MCF 10A (cell line): ENCODE measurements at regions of chr18 and their contacts with region 1.

Region 1: DNA sequence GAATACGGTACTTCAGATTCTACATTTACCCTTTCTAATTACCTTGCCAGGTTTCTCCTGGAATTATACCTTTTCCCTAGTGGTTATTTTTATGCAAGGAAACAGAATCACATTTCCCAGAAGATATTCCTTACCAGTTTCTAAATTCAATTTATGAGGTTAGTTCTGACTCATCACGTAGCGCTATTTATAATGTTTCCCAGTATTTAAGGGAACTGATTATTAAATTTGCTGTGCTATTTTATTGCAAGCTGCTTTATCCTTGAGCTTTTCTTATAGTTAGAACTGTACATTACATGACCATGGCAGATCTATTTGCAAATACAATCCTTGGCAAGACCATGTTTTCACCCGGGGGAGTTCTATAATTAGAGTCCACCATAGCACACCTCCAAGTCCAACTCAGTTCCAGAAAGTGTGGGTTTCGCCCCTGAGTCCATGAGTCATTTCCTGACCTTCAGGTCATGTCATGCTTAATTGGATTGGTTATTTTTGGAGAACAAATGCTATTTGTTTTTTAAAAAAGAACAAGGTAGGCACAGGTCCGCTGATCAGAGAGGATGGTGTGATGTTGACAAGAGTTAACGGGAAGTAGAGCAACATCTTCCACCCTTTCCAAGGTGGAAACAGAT is 126.6 kb downstream of the ZNF532 start:
- DNase-seq: peak; percentile 90
- H3K4me3 Mint-ChIP-seq: no peak overlapping the region
- H3K27ac Mint-ChIP-seq: no peak overlapping the region
- H3K4me1 Mint-ChIP-seq: peaks cover 36% of the 10 kb centered on the region
- H3K27me3 Mint-ChIP-seq: no peaks in the 10 kb centered on the region
- CTCF ChIP-seq: no peak

Region 2: GRCh38 chr18:58476516-58477256 is 514.6 kb before region 1 on chr18:
- CTCF ChIA-PET with region 1: no interaction called
- POLR2A ChIA-PET with region 1: no interaction called
- intact Hi-C with region 1: no loop called
- DNase-seq: no peak
- H3K4me3 Mint-ChIP-seq: no peak overlapping the region
- H3K27ac Mint-ChIP-seq: no peak overlapping the region
- H3K4me1 Mint-ChIP-seq: peaks cover 23% of the 10 kb centered on the region
- H3K27me3 Mint-ChIP-seq: no peaks in the 10 kb centered on the region
- CTCF ChIP-seq: no peak

Region 3: DNA sequence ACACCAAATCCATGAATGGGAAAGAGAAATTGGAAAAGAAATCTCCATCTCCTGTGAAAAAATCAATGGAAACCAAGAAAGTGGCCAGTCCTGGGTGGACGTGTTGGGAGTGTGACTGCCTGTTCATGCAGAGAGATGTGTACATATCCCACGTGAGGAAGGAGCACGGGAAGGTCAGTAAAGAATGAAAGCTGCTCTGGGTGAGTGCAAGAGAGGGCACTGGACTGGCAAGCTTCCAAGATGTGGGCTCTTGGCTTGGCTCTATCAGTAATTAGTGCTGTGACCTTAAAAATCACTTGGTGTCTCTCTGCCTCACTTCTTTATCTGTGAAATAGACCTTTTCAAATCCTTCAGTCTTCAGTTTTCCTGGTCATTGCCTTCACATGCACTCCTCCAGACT is 37.7 kb before region 1 on chr18:
- CTCF ChIA-PET with region 1: no interaction called
- POLR2A ChIA-PET with region 1: no interaction called
- intact Hi-C with region 1: loop called (anchors 5 kb)
- DNase-seq: peak; percentile 14
- H3K4me3 Mint-ChIP-seq: no peak overlapping the region
- H3K27ac Mint-ChIP-seq: no peak overlapping the region
- H3K4me1 Mint-ChIP-seq: peaks cover 4% of the 10 kb centered on the region
- H3K27me3 Mint-ChIP-seq: no peaks in the 10 kb centered on the region
- CTCF ChIP-seq: no peak

Region 4: GRCh38 chr18:59008301-59008974 is 17.2 kb after region 1 on chr18:
- CTCF ChIA-PET with region 1: interaction called, 3 read pairs
- POLR2A ChIA-PET with region 1: interaction called, 12 read pairs
- intact Hi-C with region 1: no loop called
- DNase-seq: peak; percentile 76
- H3K4me3 Mint-ChIP-seq: peak overlapping the region; percentile 61
- H3K27ac Mint-ChIP-seq: peak overlapping the region; percentile 85
- H3K4me1 Mint-ChIP-seq: peaks cover 10% of the 10 kb centered on the region
- H3K27me3 Mint-ChIP-seq: no peaks in the 10 kb centered on the region
- CTCF ChIP-seq: no peak